Naive thymus-derived CD4-positive, alpha-beta T cell (primary cell): ENCODE measurements at regions of chr5 and their contacts with region 1.

Region 1: GRCh38 chr5:159209438-159210305 is at the start of gene RNF145:
- DNase-seq: peak; percentile 93 to 96 (median 94)
- ATAC-seq: peak; percentile 89
- H3K4me3 ChIP-seq: peak within 1 kb of the TSS; percentile 90
- H3K4me3 Mint-ChIP-seq: peak within 1 kb of the TSS; percentile 95 to 99 (median 96)
- H3K27ac ChIP-seq: peak within 1 kb of the TSS; percentile 88
- H3K27ac Mint-ChIP-seq: peak within 1 kb of the TSS; percentile 91 to 99 (median 97)
- H3K4me1 ChIP-seq: peaks cover 17 to 31% of the 10 kb centered on the region in 2 donors
- H3K4me1 Mint-ChIP-seq: peaks cover 44 to 64% (median 54%) of the 10 kb centered on the region in 7 donors
- H3K27me3 ChIP-seq: no peaks in the 10 kb centered on the region
- H3K27me3 Mint-ChIP-seq: no peaks in the 10 kb centered on the region
- total RNA-seq, gene RNF145: 51.8 to 142 (median 70.6) TPM

Region 2: DNA sequence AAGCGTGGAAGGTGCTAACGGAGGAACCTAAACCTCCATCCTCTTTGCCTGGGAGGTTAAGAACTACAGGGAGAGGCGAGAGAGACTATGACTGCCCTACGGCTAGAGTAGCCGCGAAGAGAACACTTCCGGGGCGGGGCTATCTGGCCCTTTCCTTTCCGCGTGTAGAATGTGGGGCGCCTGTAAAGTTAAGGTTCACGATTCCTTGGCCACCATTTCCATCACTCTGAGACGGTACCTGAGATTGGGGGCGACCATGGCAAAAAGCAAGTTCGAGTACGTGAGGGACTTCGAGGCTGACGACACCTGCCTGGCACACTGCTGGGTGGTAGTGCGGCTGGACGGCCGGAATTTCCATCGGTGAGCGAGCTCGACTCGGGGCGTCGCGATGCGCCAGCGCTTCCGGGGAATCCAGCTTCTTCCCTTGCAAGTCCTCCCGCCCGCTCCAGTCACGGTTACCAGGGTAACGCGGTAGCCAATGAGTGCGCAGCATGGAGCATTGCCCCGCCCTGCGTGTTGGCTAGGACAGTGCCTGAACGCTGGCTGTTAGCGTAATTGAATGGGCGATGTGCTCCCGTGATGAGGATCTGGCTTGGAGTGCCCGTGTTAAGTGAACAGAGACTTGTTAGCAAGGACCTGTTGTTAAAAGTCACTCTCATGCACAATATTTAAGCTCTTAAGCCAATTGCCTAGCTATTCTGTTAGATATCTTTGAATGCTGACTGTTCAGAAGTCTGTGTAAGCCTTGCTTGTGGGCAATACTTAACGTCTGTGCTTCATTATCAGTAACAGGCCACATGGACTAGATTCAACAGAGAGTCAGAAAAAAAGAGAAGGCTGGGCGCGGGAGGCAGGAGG is 1478.2 kb before region 1 on chr5 and contains the start of gene THG1L:
- CTCF ChIA-PET with region 1: no interaction called
- POLR2A ChIA-PET with region 1: no interaction called
- intact Hi-C with region 1: loop called in 1 of 2 experiments (anchors 1 kb)
- DNase-seq: peak; percentile 94 to 98 (median 96)
- ATAC-seq: peak; percentile 98
- H3K4me3 ChIP-seq: peak within 1 kb of the TSS; percentile 73
- H3K4me3 Mint-ChIP-seq: peak within 1 kb of the TSS; percentile 87 to 99 (median 97)
- H3K27ac ChIP-seq: peak within 1 kb of the TSS; percentile 73
- H3K27ac Mint-ChIP-seq: peak within 1 kb of the TSS; percentile 80 to 98 (median 93)
- H3K4me1 ChIP-seq: peaks cover 3 to 7% of the 10 kb centered on the region in 2 donors
- H3K4me1 Mint-ChIP-seq: peaks cover 9 to 26% (median 23%) of the 10 kb centered on the region in 7 donors
- H3K27me3 ChIP-seq: no peaks in the 10 kb centered on the region
- H3K27me3 Mint-ChIP-seq: no peaks in the 10 kb centered on the region
- total RNA-seq, gene THG1L: 6.2 to 17.4 (median 7.4) TPM

Region 3: DNA sequence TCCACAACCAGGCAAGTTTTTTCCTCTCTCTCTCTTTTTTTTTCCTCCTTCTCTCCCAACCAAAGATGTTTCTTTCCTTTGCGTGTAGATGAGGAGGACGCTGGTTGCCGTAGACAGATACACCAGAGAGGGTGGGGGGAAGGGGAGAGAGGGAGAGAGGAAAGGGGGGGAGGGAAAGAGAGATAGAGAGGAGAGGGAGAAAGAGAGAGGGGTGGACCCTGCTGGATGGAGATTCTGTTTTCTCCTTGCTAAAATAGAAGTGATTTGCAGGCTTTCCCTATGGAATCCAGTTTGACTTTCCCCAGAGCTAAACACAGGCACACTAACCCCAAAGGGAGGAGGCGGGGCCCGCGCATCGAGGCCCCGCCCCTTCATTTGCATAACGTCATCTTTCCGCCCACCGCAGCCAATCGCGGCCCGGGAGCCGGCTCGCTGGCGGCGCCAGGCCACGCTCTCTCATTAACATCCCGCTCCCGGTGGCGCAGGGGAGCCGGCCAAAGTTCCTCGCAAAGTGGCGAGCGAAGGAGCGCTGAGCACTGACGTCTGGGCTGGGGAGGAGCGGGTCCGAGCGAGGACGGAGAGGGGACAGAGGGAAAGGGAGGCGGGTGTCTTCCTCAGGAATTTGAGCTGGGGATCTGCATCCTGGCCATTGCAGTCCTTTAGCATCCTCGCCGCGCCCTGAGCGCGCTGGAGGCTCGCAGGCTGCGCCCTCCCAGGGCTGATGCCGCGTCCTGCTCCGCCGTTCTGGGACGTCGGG is 109.5 kb before region 1 on chr5:
- CTCF ChIA-PET with region 1: no interaction called
- POLR2A ChIA-PET with region 1: no interaction called
- intact Hi-C with region 1: loop called (anchors 1 to 2 kb)
- DNase-seq: peak; percentile 72 to 86 (median 84)
- ATAC-seq: peak; percentile 93
- H3K4me3 ChIP-seq: peak overlapping the region; percentile 59
- H3K4me3 Mint-ChIP-seq: peak overlapping the region; percentile 87 to 93 (median 92)
- H3K27ac ChIP-seq: no peak overlapping the region
- H3K27ac Mint-ChIP-seq: peak overlapping the region; percentile 29 to 89 (median 75)
- H3K4me1 ChIP-seq: peaks cover 13 to 19% of the 10 kb centered on the region in 2 donors
- H3K4me1 Mint-ChIP-seq: peaks cover 31 to 51% (median 35%) of the 10 kb centered on the region in 7 donors
- H3K27me3 ChIP-seq: peaks cover 18 to 22% of the 10 kb centered on the region in 2 donors
- H3K27me3 Mint-ChIP-seq: peaks cover 52 to 92% (median 60%) of the 10 kb centered on the region in 5 donors

Region 4: GRCh38 chr5:159198063-159199036 is 11.3 kb before region 1 on chr5:
- CTCF ChIA-PET with region 1: interaction called, 5 read pairs
- POLR2A ChIA-PET with region 1: interaction called, 41 read pairs
- intact Hi-C with region 1: loop called (anchors 1 kb)
- DNase-seq: peak in 3 of 9 donors; percentile 29 to 36 (median 31)
- ATAC-seq: peak; percentile 87
- H3K4me3 ChIP-seq: no peak overlapping the region
- H3K4me3 Mint-ChIP-seq: peak overlapping the region in 9 of 10 donors; percentile 3 to 63 (median 48)
- H3K27ac ChIP-seq: peak overlapping the region; percentile 9
- H3K27ac Mint-ChIP-seq: peak overlapping the region; percentile 0 to 83 (median 51)
- H3K4me1 ChIP-seq: peaks cover 23 to 37% of the 10 kb centered on the region in 2 donors
- H3K4me1 Mint-ChIP-seq: peaks cover 43 to 92% (median 86%) of the 10 kb centered on the region in 7 donors
- H3K27me3 ChIP-seq: no peaks in the 10 kb centered on the region
- H3K27me3 Mint-ChIP-seq: no peaks in the 10 kb centered on the region

Region 5: DNA sequence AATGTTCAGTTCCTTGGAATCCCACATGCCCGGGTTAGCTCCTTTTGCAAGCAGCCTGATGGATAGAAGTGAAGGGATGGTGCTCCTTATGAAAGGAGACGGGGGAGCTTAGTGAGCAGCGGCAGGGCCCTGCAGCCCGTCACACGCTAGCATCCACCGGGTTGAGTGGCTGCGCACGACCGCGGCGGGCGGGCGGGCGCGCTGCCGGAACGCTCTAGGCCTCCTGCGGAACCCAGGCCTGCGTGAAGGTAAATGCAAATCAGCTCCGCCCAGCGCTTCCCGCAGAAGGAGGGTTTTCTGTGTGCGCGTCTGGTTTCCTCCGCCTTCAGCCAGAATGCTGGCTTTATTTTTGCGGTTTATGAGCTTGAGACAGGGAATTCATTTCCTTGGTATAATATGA is 100.8 kb after region 1 on chr5:
- CTCF ChIA-PET with region 1: no interaction called
- POLR2A ChIA-PET with region 1: interaction called, 3 read pairs
- intact Hi-C with region 1: loop called in 1 of 2 experiments (anchors 1 kb)
- DNase-seq: peak in 7 of 9 donors; percentile 2 to 45 (median 41)
- ATAC-seq: peak; percentile 90
- H3K4me3 ChIP-seq: peak overlapping the region; percentile 32
- H3K4me3 Mint-ChIP-seq: peak overlapping the region; percentile 18 to 81 (median 68)
- H3K27ac ChIP-seq: no peak overlapping the region
- H3K27ac Mint-ChIP-seq: peak overlapping the region in 4 of 9 donors; percentile 60 to 86 (median 70)
- H3K4me1 ChIP-seq: peaks cover 3 to 8% of the 10 kb centered on the region in 2 donors
- H3K4me1 Mint-ChIP-seq: peaks cover 3 to 17% (median 11%) of the 10 kb centered on the region in 7 donors
- H3K27me3 ChIP-seq: no peaks in the 10 kb centered on the region
- H3K27me3 Mint-ChIP-seq: peaks cover 0 to 79% (median 10%) of the 10 kb centered on the region in 5 donors

Region 6: DNA sequence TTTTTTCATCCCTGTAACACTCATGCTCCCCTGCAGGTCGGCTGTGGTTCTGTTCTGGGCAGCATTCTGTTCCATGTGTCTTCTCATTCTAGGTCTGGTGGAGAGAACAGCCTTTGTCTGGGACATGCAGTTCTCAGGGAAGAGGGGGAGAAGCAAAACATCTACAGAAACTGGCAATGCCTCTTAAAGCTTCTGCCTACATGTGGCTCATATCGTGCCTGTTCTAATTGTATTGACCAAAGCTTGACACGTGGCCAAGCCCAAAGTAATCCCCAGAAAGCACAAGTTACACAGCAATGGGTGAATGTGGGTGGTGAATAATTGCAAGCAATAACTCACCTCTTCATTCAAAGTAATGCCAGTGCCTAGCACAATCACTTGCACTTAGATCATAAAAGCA is 338.8 kb after region 1 on chr5:
- CTCF ChIA-PET with region 1: no interaction called
- POLR2A ChIA-PET with region 1: no interaction called
- intact Hi-C with region 1: no loop called
- DNase-seq: no peak
- ATAC-seq: no peak
- H3K4me3 ChIP-seq: no peak overlapping the region
- H3K4me3 Mint-ChIP-seq: no peak overlapping the region
- H3K27ac ChIP-seq: no peak overlapping the region
- H3K27ac Mint-ChIP-seq: no peak overlapping the region
- H3K4me1 ChIP-seq: no peaks in the 10 kb centered on the region
- H3K4me1 Mint-ChIP-seq: no peaks in the 10 kb centered on the region
- H3K27me3 ChIP-seq: no peaks in the 10 kb centered on the region
- H3K27me3 Mint-ChIP-seq: peaks cover 5 to 19% (median 10%) of the 10 kb centered on the region in 5 donors

Region 7: GRCh38 chr5:159987031-159987674 is 777.5 kb after region 1 on chr5:
- CTCF ChIA-PET with region 1: interaction called, 3 read pairs
- POLR2A ChIA-PET with region 1: no interaction called
- intact Hi-C with region 1: loop called in 1 of 2 experiments (anchors 1 kb)
- DNase-seq: peak; percentile 56 to 73 (median 69)
- ATAC-seq: peak; percentile 92
- H3K4me3 ChIP-seq: peak overlapping the region; percentile 58
- H3K4me3 Mint-ChIP-seq: peak overlapping the region; percentile 55 to 78 (median 66)
- H3K27ac ChIP-seq: no peak overlapping the region
- H3K27ac Mint-ChIP-seq: peak overlapping the region in 3 of 9 donors; percentile 70 to 83 (median 70)
- H3K4me1 ChIP-seq: peaks cover 0 to 6% of the 10 kb centered on the region in 2 donors
- H3K4me1 Mint-ChIP-seq: peaks cover 0 to 3% (median 0%) of the 10 kb centered on the region in 7 donors
- H3K27me3 ChIP-seq: peaks cover 0 to 5% of the 10 kb centered on the region in 2 donors
- H3K27me3 Mint-ChIP-seq: peaks cover 24 to 70% (median 34%) of the 10 kb centered on the region in 5 donors

Region 8: DNA sequence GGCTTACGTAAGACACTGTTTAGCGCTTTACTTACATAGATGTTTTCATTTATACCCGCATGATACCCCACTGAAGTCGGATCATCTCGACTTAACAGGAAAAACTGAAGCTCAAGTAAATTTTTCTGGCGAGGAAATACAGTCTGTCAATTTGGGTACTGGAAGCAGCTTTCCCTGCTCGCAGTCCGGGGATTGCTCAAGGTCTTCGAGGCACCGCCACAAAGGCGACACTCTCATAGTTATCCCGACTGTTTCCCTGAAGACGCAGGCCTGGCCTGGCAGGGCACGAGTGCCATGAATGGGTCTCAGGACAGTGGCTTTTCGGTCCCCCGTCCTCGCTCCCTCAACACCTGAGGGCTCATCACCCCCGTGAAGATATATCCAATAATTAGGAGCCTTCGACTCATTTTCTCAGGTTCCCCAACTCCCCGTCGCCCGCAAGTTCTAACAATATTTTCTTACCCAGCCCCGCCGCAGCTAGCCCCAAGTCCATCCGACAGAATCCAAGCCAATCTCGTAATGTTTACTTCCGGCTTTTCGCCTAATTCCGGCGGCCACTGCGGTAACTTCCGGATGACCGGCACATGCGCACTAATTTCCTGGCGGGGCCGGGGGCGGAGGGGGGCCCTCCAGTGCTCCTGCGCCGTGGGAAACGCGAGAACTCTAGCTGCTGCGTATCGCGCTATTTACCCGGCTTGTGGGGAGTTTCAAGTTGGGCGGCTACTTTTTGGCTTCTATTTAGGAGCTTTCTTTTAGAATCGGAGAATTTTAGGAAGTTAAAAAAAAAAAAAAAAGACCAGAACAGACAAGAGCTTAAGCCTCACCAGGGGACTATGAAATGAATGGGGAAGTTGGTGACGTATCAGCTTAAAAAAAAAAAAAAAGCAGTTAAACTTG is 1209.1 kb after region 1 on chr5 and contains the start of gene SLU7:
- CTCF ChIA-PET with region 1: interaction called, 4 read pairs
- POLR2A ChIA-PET with region 1: no interaction called
- intact Hi-C with region 1: loop called (anchors 1 to 5 kb)
- DNase-seq: peak; percentile 80 to 93 (median 91)
- ATAC-seq: peak; percentile 86
- H3K4me3 ChIP-seq: peak within 1 kb of the TSS; percentile 94
- H3K4me3 Mint-ChIP-seq: peak within 1 kb of the TSS; percentile 91 to 100 (median 96)
- H3K27ac ChIP-seq: peak within 1 kb of the TSS; percentile 98
- H3K27ac Mint-ChIP-seq: peak within 1 kb of the TSS; percentile 95 to 100 (median 98)
- H3K4me1 ChIP-seq: peaks cover 23 to 28% of the 10 kb centered on the region in 2 donors
- H3K4me1 Mint-ChIP-seq: peaks cover 45 to 85% (median 79%) of the 10 kb centered on the region in 7 donors
- H3K27me3 ChIP-seq: no peaks in the 10 kb centered on the region
- H3K27me3 Mint-ChIP-seq: no peaks in the 10 kb centered on the region
- total RNA-seq, gene SLU7: 53.0 to 85.3 (median 77.0) TPM